GM23248 (cell line): ENCODE measurements at regions of chr2 and their contacts with region 1.

Region 1: DNA sequence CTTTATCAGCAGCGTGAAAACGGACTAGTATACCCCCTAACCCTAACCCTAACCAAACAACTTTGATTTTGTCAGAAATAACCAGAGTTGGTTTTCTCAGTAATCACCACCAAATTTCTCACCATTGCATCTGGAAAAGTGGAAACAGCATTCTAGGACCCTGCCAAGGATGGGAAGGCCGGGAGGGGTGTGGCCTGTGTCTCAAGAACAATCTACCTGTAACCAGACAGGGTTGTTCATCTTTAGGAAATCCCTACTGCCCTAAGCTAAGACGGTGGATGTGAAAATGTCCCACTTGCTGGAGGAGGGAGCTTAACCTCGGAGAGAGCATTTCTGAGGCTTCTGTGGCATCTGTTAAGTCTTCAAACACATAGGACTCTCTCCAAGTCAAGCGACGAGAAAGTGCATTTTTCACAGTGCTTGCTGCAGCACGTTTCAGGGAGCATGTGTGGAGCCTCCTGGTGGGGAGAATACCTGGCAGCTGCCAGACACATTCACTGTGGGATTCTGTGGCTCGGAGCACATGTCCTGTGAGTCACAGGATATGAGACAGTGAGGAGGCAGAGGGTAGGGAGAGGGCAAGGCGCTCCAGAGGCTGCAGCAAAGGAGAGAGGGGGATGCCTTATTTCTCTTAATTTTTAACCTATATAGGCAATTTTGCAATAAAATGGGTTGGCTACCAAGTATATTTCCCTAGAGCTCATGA is 207.5 kb downstream of the SPP2 start:
- DNase-seq: peak; percentile 99
- H3K4me3 ChIP-seq: peak overlapping the region; percentile 29
- H3K27ac ChIP-seq: peak overlapping the region; percentile 81
- H3K4me1 ChIP-seq: peaks cover 20% of the 10 kb centered on the region
- H3K27me3 ChIP-seq: no peaks in the 10 kb centered on the region

Region 2: GRCh38 chr2:233690435-233690834 is 567.6 kb before region 1 on chr2:
- in situ Hi-C with region 1: no loop called
- DNase-seq: no peak
- H3K4me3 ChIP-seq: no peak overlapping the region
- H3K27ac ChIP-seq: no peak overlapping the region
- H3K4me1 ChIP-seq: no peaks in the 10 kb centered on the region
- H3K27me3 ChIP-seq: peaks cover 19% of the 10 kb centered on the region

Region 3: DNA sequence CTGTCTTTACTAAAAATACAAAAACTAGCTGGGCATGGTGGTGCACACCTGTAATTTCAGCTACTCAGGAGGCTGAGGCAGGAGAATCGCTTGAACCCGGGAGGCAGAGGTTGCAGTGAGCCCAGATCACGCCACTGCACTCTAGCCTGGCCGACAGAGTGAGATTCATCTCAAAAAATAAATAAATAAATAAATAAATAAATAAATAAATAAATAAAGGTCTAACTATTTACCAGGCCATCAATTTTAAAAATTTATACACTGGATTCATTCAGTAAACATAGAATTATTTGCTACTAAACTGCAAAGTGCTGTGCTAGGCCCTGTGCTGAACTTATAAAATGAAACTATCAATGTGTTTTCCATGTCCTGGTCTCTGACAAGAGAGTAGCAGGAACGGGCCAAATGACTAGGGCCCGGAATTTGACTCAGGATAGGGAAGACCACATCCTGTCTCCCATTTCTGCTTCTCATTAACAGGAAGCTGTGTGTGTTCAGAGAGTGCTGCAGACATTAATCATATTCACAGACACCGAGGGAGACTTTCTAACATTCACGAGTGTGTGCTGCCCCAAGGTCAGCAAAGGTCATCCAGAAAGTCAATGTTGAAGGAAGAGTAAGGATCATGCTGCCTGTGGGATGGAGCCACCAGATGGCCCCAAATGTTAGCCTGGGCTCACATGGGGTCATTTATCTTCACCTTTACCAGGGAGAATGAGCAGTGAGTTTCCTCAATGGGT is 111.8 kb before region 1 on chr2:
- in situ Hi-C with region 1: loop called (anchors 10 kb)
- DNase-seq: peak; percentile 85
- H3K4me3 ChIP-seq: no peak overlapping the region
- H3K27ac ChIP-seq: peak overlapping the region; percentile 28
- H3K4me1 ChIP-seq: peaks cover 6% of the 10 kb centered on the region
- H3K27me3 ChIP-seq: no peaks in the 10 kb centered on the region

Region 4: DNA sequence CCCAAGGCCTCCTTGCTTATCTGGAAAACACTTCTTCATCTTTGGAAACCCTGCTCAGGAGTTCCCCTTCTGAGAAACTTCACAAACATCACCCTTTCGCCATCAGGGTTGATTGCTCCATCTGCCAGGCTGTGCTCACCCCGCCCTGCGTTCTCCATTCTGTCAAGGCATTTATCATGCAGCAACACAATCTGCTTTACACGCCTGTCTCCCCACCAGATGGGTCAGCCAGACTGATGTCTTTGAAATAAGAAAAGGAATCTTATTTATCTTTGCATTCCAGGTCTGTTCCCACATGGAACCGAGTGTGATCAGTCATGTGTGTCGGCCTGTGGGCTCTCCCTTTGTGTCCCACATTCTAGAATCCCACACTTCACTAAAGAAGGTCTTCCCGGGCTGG is 348.9 kb after region 1 on chr2:
- in situ Hi-C with region 1: no loop called
- DNase-seq: no peak
- H3K4me3 ChIP-seq: no peak overlapping the region
- H3K27ac ChIP-seq: no peak overlapping the region
- H3K4me1 ChIP-seq: no peaks in the 10 kb centered on the region
- H3K27me3 ChIP-seq: no peaks in the 10 kb centered on the region